ENCODE measurements at regions of chr2 and their contacts with region 1.

Region 1: DNA sequence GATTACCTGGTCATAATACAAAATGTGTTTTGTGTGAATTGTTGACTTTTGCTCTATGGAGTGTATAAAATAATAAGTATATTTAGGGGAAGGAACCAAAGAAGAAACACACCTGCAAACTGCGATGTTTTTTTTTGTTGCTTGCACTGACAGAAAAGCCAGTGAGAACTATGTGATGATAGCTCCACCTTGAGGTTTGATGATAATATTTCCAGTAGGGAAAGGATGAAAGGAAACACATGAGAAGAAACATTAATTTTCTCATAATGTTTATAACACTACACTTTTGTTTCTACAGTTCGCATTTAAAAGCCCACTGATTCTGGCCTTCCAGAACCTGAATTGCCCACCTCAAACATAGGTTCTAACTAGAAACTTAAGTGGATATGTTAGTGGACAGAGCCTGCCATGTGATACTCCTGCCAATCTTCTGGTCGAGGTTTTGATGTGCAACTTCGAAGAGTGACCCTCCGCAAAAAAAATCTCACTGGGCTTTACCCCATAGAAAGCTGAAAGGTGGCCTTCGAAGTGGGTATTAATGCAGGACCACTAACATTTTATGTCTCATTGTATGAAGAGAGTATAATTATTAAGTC is 476.4 kb upstream of the SPHKAP start:
- DNase-seq: peak; percentile 8 to 48
- ATAC-seq: peak; percentile 80 to 81; a peak in 5 of 6 replicates
- H3K4me3 ChIP-seq: no peak overlapping the region
- H3K27ac ChIP-seq: no peak overlapping the region; a peak in 1 of 6 replicates
- H3K4me1 ChIP-seq: no peaks in the 10 kb centered on the region
- CTCF ChIP-seq: peak; percentile 77
- EP300 ChIP-seq: no peak
- POLR2A ChIP-seq: no peak
- RAD21 ChIP-seq: peak; percentile 80 to 88

Region 2: GRCh38 chr2:227657199-227657845 is 1000.6 kb before region 1 on chr2:
- CTCF ChIA-PET with region 1: interaction called, 10 read pairs
- POLR2A ChIA-PET with region 1: no interaction called
- DNase-seq: peak in 1 of 2 experiments; percentile 37
- ATAC-seq: peak in 1 of 2 experiments; percentile 13; a peak in 3 of 6 replicates
- H3K4me3 ChIP-seq: no peak overlapping the region
- H3K27ac ChIP-seq: peak overlapping the region; percentile 81 to 89
- H3K4me1 ChIP-seq: peaks cover 54% of the 10 kb centered on the region
- CTCF ChIP-seq: no peak
- EP300 ChIP-seq: no peak
- POLR2A ChIP-seq: no peak
- RAD21 ChIP-seq: no peak

Region 3: DNA sequence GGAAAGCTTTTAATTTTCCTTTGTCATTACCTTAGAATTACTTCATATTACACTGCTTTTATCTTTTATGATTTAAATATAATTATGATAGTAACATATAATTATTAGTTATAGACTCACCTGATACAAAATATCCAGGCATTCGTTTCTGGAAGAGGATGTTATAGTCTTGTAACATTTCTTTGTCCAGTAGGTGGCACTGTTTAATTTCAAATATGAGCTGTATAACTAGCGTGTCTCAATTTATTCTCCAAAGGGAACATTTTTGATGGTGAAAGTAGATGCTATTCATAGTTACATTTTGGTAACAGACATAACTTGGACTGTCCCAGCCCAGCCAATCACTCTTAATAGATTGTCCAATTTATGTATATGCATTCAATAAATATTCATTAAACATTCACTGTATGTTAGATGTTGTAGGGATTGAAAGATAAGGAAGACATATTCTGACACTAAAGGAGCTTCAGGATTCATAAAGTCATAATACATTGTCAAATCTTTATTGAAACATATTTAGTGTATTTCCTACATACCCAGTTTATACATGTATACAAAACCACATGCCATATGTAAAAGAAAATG is 767.3 kb before region 1 on chr2:
- CTCF ChIA-PET with region 1: interaction called, 34 read pairs
- POLR2A ChIA-PET with region 1: interaction called, 3 read pairs
- DNase-seq: peak; percentile 22 to 54
- ATAC-seq: peak; percentile 83 to 87; a peak in 5 of 6 replicates
- H3K4me3 ChIP-seq: no peak overlapping the region
- H3K27ac ChIP-seq: peak overlapping the region in 1 of 2 experiments; percentile 58; a peak in 1 of 6 replicates
- H3K4me1 ChIP-seq: peaks cover 6% of the 10 kb centered on the region; the same call in 2 of the 3 replicates
- CTCF ChIP-seq: peak; percentile 80
- EP300 ChIP-seq: no peak
- POLR2A ChIP-seq: no peak
- RAD21 ChIP-seq: peak; percentile 75 to 83

Region 4: DNA sequence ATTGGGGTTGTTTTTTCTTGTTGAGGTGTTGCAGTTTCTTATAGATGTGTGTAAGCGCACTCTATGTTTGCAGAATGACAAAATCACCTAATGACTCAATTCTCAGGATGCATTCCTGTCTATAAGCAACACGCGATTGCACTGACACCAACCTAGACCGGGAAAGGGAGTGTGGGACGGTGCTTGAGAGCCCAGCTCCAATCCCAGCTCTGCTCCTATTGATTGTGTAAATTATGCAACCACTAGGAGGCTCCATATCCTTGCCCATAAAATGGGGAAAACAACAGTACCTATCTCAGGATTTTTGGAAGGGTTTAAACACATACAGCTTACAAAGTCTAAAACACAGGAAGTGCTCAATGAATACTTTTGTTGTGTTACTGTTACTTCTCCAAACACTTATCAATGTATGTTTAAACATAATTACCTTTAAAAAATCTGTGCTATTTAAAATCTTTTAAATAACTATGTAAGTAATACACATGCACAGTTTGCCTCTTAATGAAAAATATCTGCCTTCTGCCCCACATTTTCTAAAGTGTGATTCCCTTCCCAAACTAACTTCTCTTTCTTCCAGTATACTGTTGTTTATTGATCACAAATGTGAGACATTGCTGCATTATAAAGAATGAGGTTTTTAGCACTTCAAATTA is 608.9 kb before region 1 on chr2:
- CTCF ChIA-PET with region 1: interaction called, 14 read pairs
- POLR2A ChIA-PET with region 1: no interaction called
- DNase-seq: peak; percentile 41 to 62
- ATAC-seq: peak; percentile 98 to 100
- H3K4me3 ChIP-seq: no peak overlapping the region
- H3K27ac ChIP-seq: no peak overlapping the region
- H3K4me1 ChIP-seq: peaks cover 4% of the 10 kb centered on the region; the same call in 1 of the 3 replicates
- CTCF ChIP-seq: peak; percentile 74
- EP300 ChIP-seq: no peak
- POLR2A ChIP-seq: no peak
- RAD21 ChIP-seq: peak; percentile 78 to 88

Region 5: GRCh38 chr2:228224410-228224809 is 433.5 kb before region 1 on chr2:
- CTCF ChIA-PET with region 1: no interaction called
- POLR2A ChIA-PET with region 1: no interaction called
- DNase-seq: peak in 1 of 2 experiments; percentile 7
- ATAC-seq: peak in 1 of 2 experiments; percentile 50; a peak in 1 of 6 replicates
- H3K4me3 ChIP-seq: no peak overlapping the region
- H3K27ac ChIP-seq: no peak overlapping the region
- H3K4me1 ChIP-seq: no peaks in the 10 kb centered on the region
- CTCF ChIP-seq: no peak
- EP300 ChIP-seq: no peak
- POLR2A ChIP-seq: no peak
- RAD21 ChIP-seq: no peak

Region 6: GRCh38 chr2:228646061-228646460 is 11.8 kb before region 1 on chr2:
- CTCF ChIA-PET with region 1: interaction called, 14 read pairs
- POLR2A ChIA-PET with region 1: no interaction called
- DNase-seq: no peak
- ATAC-seq: no peak
- H3K4me3 ChIP-seq: no peak overlapping the region
- H3K27ac ChIP-seq: no peak overlapping the region
- H3K4me1 ChIP-seq: no peaks in the 10 kb centered on the region
- CTCF ChIP-seq: no peak
- EP300 ChIP-seq: no peak
- POLR2A ChIP-seq: no peak
- RAD21 ChIP-seq: no peak